ENCODE measurements at regions of chr12 and their contacts with region 1.

Region 1: GRCh38 chr12:89935825-89936224 is 227.2 kb upstream of the ATP2B1 start:
- DNase-seq: no peak

Region 2: GRCh38 chr12:89451841-89452251 is 484.0 kb before region 1 on chr12:
- intact Hi-C with region 1: no loop called
- DNase-seq: no peak

Region 3: GRCh38 chr12:89701606-89702206 is 234.1 kb before region 1 on chr12:
- intact Hi-C with region 1: loop called in 1 of 2 experiments (anchors 5 kb)
- DNase-seq: no peak

Region 4: GRCh38 chr12:89862511-89863179 is 73.2 kb before region 1 on chr12:
- intact Hi-C with region 1: no loop called
- DNase-seq: no peak

Measured in posterior vena cava (tissue), 2 donors.